Ovary (tissue), 10 donors: ENCODE measurements at regions of chr7 and their contacts with region 1.

Region 1: GRCh38 chr7:21261627-21262594 is 166.0 kb upstream of the SP4 start:
- DNase-seq: no peak
- H3K4me3 ChIP-seq: no peak overlapping the region
- H3K27ac ChIP-seq: no peak overlapping the region
- H3K4me1 ChIP-seq: no peaks in the 10 kb centered on the region
- H3K27me3 ChIP-seq: no peaks in the 10 kb centered on the region
- CTCF ChIP-seq: no peak
- EP300 ChIP-seq: no peak
- POLR2A ChIP-seq: no peak

Region 2: DNA sequence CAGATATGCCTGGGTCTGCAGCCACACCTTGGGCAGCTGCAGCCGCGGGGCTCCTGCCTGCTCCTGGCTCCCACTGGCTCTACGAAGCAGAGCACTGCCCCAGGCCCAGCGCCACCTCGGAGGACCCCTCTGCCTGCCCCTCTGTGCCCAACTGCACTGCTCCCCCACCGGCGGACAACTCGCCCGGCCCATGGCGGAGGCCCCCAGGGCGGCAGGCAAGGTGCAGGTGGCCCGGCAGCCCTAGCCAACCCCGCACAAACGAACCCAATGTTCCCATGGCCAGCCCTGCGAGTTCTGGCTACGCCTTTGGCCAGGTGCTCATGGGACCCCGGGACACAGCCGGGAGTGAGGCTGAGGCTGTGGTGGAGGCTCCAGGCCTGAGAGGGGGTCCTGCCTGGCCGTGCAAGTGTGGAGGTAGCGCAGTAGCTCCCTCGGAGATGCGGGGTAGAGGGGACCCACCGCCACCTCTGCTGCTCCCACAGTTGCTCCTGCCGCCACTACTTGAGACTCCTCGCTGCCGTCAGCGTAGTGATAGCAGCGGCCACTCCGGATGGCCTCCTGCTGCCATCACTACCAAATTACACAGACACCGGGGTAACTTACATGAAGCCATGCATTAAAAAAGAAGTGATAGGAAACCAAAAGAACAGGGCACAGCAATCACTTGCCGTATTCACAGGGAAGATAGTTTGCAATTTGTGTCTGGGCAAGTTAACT is 68.7 kb after region 1 on chr7:
- intact Hi-C with region 1: no loop called
- DNase-seq: no peak
- H3K4me3 ChIP-seq: no peak overlapping the region
- H3K27ac ChIP-seq: no peak overlapping the region
- H3K4me1 ChIP-seq: no peaks in the 10 kb centered on the region
- H3K27me3 ChIP-seq: no peaks in the 10 kb centered on the region
- CTCF ChIP-seq: no peak
- EP300 ChIP-seq: no peak
- POLR2A ChIP-seq: no peak

Region 3: GRCh38 chr7:21507626-21508343 is 245.9 kb after region 1 on chr7:
- intact Hi-C with region 1: loop called in 1 of 4 experiments (anchors 10 kb)
- DNase-seq: no peak
- H3K4me3 ChIP-seq: no peak overlapping the region
- H3K27ac ChIP-seq: no peak overlapping the region
- H3K4me1 ChIP-seq: no peaks in the 10 kb centered on the region
- H3K27me3 ChIP-seq: no peaks in the 10 kb centered on the region
- CTCF ChIP-seq: no peak
- EP300 ChIP-seq: no peak
- POLR2A ChIP-seq: no peak

Region 4: GRCh38 chr7:21617916-21618390 is 356.0 kb after region 1 on chr7:
- intact Hi-C with region 1: no loop called
- DNase-seq: peak; percentile 12 to 61 (median 44)
- H3K4me3 ChIP-seq: no peak overlapping the region
- H3K27ac ChIP-seq: no peak overlapping the region
- H3K4me1 ChIP-seq: no peaks in the 10 kb centered on the region
- H3K27me3 ChIP-seq: no peaks in the 10 kb centered on the region
- CTCF ChIP-seq: no peak
- EP300 ChIP-seq: no peak
- POLR2A ChIP-seq: no peak